Activated naive CD8-positive, alpha-beta T cell treated with anti-CD3 and anti-CD28 coated beads, Interleukin-2, amount 10 ng/mL, durations not matched to agents 7 days and 5 days (primary cell): ENCODE measurements at regions of chr17 and their contacts with region 1.

Region 1: GRCh38 chr17:40647624-40648383 is at the start of gene SMARCE1:
- DNase-seq: peak; percentile 84
- ATAC-seq: peak; percentile 73
- H3K4me3 Mint-ChIP-seq: peak within 1 kb of the TSS; percentile 95
- H3K27ac Mint-ChIP-seq: peak within 1 kb of the TSS; percentile 94
- H3K4me1 Mint-ChIP-seq: peaks cover 21% of the 10 kb centered on the region
- H3K27me3 Mint-ChIP-seq: no peaks in the 10 kb centered on the region
- total RNA-seq, gene SMARCE1: 109 to 117 TPM

Region 2: DNA sequence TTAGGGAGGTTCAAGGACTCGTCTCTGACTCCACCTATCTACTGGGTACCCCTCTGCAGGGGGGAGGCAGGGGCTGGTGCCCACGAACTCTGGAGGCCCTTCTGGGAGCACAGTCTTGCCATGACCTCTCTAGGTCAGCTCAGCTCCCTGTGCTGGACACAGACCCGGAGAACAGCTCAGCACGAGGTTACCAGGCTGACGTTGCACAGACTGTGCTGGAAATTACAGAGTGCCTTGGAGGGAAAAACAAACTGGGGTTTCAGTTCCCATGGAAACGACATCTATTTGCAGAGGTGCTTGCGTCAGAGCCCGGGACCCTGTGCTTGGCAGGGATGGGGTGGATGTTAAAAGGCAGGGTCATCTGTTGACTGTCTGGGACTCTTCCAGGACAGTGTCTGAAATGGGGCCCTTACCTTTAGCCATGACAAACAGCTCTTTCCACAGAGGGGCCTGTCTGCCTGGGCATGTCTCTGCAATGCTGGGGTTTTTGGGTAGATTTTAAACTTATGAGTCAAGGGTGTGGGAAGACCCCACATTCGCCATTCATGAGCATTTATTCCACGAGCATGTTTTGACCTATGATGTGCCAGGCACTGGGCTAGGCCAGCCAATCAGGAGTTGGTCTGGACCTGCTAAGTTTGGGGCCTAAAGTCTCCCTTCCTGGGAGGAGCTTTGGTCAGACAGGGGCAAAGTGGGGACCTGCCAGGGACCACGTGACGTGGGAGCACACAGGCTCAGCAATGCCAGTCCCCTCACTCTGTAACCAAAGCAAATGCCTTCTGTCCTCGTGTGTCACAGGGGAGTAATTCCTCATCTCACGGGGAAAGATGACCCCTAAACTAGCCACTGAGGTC is 105.0 kb before region 1 on chr17:
- POLR2A ChIA-PET with region 1: interaction called, 11 read pairs
- DNase-seq: peak; percentile 41
- ATAC-seq: peak; percentile 8
- H3K4me3 Mint-ChIP-seq: peak overlapping the region; percentile 68
- H3K27ac Mint-ChIP-seq: peak overlapping the region; percentile 86
- H3K4me1 Mint-ChIP-seq: peaks cover 73% of the 10 kb centered on the region
- H3K27me3 Mint-ChIP-seq: peaks cover 2% of the 10 kb centered on the region

Region 3: DNA sequence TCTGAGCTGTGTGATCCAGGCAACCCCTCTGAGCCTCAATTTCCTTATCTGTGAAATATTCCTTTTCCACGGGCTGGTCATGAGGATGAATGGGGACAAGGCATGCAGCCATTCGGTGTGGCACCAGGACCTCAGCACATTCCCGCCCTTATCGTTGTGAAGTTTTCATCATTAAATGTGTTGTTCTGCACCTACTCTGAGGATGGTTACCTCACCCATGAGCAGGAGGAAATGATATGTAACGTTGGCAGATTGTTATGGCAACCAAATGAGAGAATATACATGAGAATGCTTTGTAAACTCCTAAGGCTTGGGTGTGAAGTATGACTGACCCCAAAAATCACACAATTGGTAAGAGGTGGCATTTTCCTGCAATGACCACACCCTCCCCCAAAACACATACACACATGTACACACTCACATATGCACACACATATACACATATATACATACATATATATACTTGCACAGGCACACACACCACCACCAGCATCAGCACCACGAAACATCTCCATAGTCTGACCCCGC is 39.7 kb before region 1 on chr17:
- POLR2A ChIA-PET with region 1: interaction called, 11 read pairs
- DNase-seq: no peak
- ATAC-seq: peak; percentile 53
- H3K4me3 Mint-ChIP-seq: peak overlapping the region; percentile 64
- H3K27ac Mint-ChIP-seq: peak overlapping the region; percentile 87
- H3K4me1 Mint-ChIP-seq: peaks cover 83% of the 10 kb centered on the region
- H3K27me3 Mint-ChIP-seq: no peaks in the 10 kb centered on the region

Region 4: DNA sequence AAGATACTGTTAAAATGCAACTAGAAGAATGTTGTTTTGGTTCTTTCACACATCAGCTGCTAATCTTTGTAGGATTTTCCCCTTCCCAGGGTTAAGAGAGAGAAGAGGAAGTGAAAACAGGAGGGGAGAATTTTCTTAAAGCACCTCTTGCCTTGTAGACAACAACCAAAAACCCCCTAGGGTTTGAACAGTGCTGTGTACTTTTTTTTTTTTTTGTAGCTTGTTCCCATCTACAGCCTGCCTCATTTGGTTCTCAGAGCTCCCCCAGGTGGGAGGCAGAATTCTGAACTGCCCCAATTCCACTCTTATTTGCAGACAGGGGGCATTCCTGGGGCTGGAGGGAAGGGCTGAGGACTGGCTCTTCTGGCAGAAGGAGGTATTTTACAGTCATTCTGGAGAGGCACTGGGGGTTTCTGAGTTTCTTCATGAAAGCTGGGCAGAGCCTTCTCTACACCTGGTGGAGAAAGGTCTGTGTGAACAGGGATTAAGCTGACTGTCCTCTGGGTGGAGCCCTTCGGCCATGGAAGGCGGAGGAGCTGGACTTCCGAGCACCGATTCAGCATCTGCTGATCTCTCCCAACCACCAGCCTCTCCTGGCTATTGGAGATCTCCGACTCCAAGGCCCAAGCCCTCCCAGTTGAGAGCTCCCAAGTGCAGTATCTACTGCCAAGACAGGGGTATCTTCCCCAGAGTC is 32.4 kb before region 1 on chr17:
- POLR2A ChIA-PET with region 1: interaction called, 19 read pairs
- DNase-seq: no peak
- ATAC-seq: peak; percentile 39
- H3K4me3 Mint-ChIP-seq: peak overlapping the region; percentile 71
- H3K27ac Mint-ChIP-seq: peak overlapping the region; percentile 94
- H3K4me1 Mint-ChIP-seq: peaks cover 68% of the 10 kb centered on the region
- H3K27me3 Mint-ChIP-seq: no peaks in the 10 kb centered on the region

Region 5: DNA sequence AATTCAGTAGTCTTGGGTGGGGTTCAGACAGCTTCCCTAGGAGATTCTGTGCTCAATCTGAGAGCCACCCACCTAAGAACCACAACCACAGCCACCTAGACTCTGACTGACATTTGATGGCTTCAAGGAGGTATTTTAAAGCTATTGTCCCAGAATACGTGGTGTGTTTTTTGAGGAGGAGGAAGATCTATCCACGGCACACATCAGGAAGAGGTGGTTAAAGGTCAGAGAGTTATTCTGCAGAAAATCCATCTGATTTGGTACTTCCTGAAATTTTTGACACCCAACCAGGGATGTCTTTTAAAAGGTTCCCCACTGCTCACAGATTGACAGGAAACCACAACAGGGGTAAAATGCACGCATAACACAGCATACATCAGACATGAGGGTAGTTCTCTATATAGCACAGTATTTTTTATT is 25.3 kb before region 1 on chr17:
- POLR2A ChIA-PET with region 1: interaction called, 11 read pairs
- DNase-seq: no peak
- ATAC-seq: peak; percentile 77
- H3K4me3 Mint-ChIP-seq: peak overlapping the region; percentile 58
- H3K27ac Mint-ChIP-seq: peak overlapping the region; percentile 72
- H3K4me1 Mint-ChIP-seq: peaks cover 47% of the 10 kb centered on the region
- H3K27me3 Mint-ChIP-seq: no peaks in the 10 kb centered on the region

Region 6: DNA sequence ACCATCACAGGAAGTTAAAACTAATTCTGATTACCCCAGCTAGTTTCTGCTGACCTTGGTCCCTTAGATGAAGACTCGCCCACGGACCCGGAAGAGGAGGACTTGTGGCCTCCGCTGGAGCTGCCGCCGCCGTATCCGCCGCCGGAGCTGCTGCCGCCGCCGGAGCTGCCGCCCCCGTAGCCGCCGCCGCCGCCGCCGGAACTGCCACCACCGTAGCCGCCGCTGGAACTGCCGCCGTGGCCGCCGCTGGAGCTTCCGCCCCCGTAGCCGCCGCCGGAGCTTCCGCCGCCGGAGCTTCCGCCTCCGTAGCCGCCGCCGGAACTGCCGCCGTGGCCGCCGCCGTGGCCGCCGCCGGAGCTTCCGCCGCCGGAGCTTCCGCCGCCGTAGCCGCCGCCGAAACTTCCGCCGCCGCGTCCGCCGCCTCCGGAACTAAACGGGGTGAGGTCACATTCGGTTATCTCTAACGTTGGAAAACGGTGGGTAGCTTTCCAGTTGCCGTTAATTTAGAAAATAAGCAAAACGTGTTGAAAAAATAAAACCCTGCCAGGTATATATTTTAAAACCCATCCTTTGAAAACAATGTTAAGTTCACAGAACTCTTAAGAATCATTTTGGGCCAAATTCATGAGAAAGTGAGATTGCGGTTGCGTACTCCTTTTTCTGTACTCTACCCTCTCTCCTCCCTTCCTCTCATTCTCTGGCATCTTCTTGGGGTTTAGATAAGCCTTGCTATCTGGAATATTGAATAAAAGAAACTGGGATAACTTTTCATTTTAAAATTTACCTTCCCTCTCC is 171.1 kb after region 1 on chr17:
- POLR2A ChIA-PET with region 1: interaction called, 19 read pairs
- DNase-seq: peak; percentile 87
- ATAC-seq: peak; percentile 80
- H3K4me3 Mint-ChIP-seq: peak overlapping the region; percentile 87
- H3K27ac Mint-ChIP-seq: peak overlapping the region; percentile 76
- H3K4me1 Mint-ChIP-seq: peaks cover 22% of the 10 kb centered on the region
- H3K27me3 Mint-ChIP-seq: peaks cover 5% of the 10 kb centered on the region